Activated CD4-positive, alpha-beta T cell treated with anti-CD3 and anti-CD28 coated beads for 36 hours (primary cell): ENCODE measurements at regions of chr3 and their contacts with region 1.

Region 1: GRCh38 chr3:139343895-139344856 is at the start of gene MRPS22:
- DNase-seq: peak; percentile 90
- ATAC-seq: peak; percentile 97
- H3K4me3 Mint-ChIP-seq: peak within 1 kb of the TSS; percentile 58
- H3K27ac Mint-ChIP-seq: peak within 1 kb of the TSS; percentile 85
- H3K4me1 Mint-ChIP-seq: peaks cover 10% of the 10 kb centered on the region
- H3K27me3 Mint-ChIP-seq: no peaks in the 10 kb centered on the region
- total RNA-seq, gene MRPS22: 72.4 to 80.6 TPM

Region 2: DNA sequence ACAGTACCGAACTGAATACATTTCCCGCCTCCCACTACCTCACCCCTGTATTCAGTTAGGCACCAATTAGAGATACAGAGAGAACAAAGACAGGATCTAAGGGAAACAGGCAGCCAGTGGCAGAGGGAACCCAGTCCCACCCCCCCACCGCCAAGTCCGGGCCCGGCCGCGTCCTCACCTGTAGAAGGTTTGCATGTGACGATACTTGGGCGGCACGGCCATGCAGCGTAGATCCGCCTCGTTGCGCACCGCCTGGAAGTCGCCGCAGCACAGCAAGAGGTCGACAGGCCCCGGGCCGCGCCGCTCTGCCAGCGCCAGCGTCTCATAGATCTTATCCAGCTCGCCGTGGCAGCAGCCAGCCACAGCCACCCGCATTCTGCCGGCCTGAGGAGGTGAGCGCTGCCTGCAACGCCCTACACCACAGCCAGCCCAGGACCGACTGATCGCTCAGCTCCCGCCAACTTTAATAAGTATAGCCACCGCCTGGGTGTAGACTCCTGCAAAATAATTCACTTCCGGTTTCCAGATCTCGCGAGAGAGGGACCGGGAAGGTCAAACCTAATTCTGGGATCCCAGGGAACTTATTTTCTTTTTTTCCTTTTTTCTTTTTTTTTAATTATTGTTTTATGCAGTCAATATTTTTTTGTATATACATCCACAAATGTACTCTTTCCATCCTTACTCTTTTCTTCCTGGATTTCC is 1169.6 kb before region 1 on chr3 and contains the start of gene DBR1:
- CTCF ChIA-PET with region 1: no interaction called
- POLR2A ChIA-PET with region 1: no interaction called
- intact Hi-C with region 1: loop called in 1 of 2 experiments (anchors 5 kb)
- DNase-seq: peak; percentile 85
- ATAC-seq: peak; percentile 85
- H3K4me3 Mint-ChIP-seq: peak within 1 kb of the TSS; percentile 89
- H3K27ac Mint-ChIP-seq: peak within 1 kb of the TSS; percentile 96
- H3K4me1 Mint-ChIP-seq: peaks cover 30% of the 10 kb centered on the region
- H3K27me3 Mint-ChIP-seq: no peaks in the 10 kb centered on the region
- total RNA-seq, gene DBR1: 16.4 to 22.0 TPM

Region 3: GRCh38 chr3:139355476-139355875 is 11.3 kb after region 1 on chr3:
- CTCF ChIA-PET with region 1: interaction called, 6 read pairs
- POLR2A ChIA-PET with region 1: interaction called, 5 read pairs
- intact Hi-C with region 1: loop called in 1 of 2 experiments (anchors 1 kb)
- DNase-seq: no peak
- ATAC-seq: no peak
- H3K4me3 Mint-ChIP-seq: no peak overlapping the region
- H3K27ac Mint-ChIP-seq: no peak overlapping the region
- H3K4me1 Mint-ChIP-seq: peaks cover 37% of the 10 kb centered on the region
- H3K27me3 Mint-ChIP-seq: no peaks in the 10 kb centered on the region

Region 4: DNA sequence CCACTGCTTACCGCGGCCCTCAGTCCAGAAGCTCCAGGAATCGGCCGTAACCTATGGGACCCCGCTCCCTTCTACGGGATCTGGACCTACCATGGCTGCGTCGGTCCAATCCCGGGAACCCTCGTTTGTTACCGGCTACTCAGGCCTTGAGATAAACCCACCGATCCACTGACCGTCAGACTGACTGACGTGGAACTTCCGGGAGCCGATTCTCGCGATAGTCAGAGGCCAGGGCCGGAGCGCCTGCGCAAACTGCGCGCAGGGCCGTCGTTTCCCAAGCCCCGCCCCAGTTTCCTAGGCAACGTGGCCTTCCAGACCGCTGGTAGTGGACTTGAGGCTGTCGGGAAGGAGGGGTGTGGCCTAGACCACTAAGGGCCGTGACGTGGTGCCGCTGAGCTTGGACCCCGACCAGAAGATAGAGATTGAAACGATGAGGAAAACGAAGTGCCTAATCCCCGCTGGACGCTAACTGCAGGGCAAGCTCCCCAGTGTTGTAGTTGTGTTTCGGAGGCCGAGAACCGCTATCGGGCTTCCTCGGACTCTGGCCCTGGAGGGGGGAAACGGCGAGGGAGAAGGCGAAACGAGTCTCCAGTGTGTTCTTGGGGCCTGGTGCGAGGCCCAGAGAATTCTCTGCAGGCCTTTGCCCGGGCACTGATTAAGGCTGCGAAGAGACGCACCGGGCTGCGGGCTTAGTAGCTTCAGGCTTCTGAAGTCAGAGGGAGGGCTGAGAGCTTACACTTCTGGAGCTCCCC is 45.5 kb after region 1 on chr3 and contains the start of gene COPB2:
- CTCF ChIA-PET with region 1: interaction called, 6 read pairs
- POLR2A ChIA-PET with region 1: no interaction called
- intact Hi-C with region 1: loop called (anchors 1 kb)
- DNase-seq: peak; percentile 98
- ATAC-seq: peak; percentile 93
- H3K4me3 Mint-ChIP-seq: peak within 1 kb of the TSS; percentile 96
- H3K27ac Mint-ChIP-seq: peak within 1 kb of the TSS; percentile 97
- H3K4me1 Mint-ChIP-seq: peaks cover 38% of the 10 kb centered on the region
- H3K27me3 Mint-ChIP-seq: no peaks in the 10 kb centered on the region
- total RNA-seq, gene COPB2: 90.9 to 99.2 TPM

Region 5: DNA sequence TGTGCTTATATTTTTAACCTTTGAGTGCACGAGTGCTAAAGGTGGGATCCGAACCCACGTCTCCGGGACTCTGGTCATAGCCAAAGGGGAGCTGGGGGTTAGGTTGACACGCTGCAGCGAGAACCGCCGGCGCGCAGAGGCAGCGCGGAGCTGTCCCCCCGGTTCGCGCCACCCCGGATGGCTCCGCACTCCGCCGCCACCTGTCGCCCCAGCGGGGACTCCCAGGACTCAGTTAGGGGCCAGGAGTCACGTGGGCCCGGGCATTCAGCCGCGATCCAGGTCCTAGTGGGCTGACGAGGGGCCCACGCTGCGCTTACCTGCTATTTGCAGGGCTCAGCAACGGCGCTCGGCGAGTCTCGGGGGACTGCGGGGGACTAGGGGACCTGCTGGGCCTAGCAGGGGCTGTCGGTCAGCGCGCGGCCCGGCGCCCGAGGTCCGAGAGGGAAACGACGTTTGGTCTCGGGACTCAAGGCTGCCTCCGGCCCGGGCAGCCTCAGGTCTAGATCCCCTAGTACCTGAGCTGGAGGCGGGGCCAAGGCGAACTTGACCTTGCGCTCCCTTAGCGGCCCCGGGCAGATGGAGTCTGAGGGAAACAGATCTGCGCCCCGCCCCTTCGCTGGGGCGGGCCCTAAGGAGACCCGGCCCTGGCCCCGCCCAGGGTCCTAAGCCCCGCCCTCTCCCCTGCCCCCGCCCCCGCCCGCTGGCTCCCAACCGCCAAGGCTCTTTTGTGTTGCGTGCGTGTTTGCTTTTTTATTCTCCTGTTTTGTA is 333.4 kb after region 1 on chr3 and contains the start of gene NMNAT3:
- CTCF ChIA-PET with region 1: no interaction called
- POLR2A ChIA-PET with region 1: no interaction called
- intact Hi-C with region 1: loop called in 1 of 2 experiments (anchors 2 kb)
- DNase-seq: peak; percentile 92
- ATAC-seq: peak; percentile 100
- H3K4me3 Mint-ChIP-seq: peak within 1 kb of the TSS; percentile 76
- H3K27ac Mint-ChIP-seq: peak within 1 kb of the TSS; percentile 70
- H3K4me1 Mint-ChIP-seq: peaks cover 11% of the 10 kb centered on the region
- H3K27me3 Mint-ChIP-seq: no peaks in the 10 kb centered on the region
- total RNA-seq, gene NMNAT3: 5.9 to 6.1 TPM

Region 6: DNA sequence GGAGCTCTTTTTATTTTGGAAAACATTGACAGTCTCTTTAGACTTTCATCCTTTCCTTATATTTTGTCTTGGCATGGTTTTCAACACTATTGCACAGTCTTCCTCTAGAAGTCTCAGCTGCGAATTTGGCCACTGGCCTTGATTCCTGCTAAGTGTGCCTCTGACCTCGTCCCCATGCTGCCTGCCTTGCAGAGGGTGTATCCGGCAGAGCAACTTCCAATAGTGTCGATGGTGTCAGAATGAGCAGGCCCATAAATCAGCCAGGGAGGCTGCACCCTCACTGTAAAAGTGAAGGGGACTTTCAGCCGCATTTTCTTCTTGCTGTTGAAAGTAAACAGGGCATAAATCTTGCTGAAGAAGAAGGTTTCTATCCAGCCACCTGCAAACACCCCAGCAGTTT is 997.0 kb after region 1 on chr3:
- CTCF ChIA-PET with region 1: no interaction called
- POLR2A ChIA-PET with region 1: no interaction called
- intact Hi-C with region 1: no loop called
- DNase-seq: no peak
- ATAC-seq: no peak
- H3K4me3 Mint-ChIP-seq: no peak overlapping the region
- H3K27ac Mint-ChIP-seq: no peak overlapping the region
- H3K4me1 Mint-ChIP-seq: no peaks in the 10 kb centered on the region
- H3K27me3 Mint-ChIP-seq: no peaks in the 10 kb centered on the region